CD8-positive, alpha-beta T cell (primary cell): ENCODE measurements at regions of chr11 and their contacts with region 1.

Region 1: GRCh38 chr11:3947061-3947460 is 91.6 kb downstream of the STIM1 start:
- DNase-seq: peak; percentile 23 to 90 (median 62)
- ATAC-seq: peak; percentile 72
- H3K4me3 ChIP-seq: peak overlapping the region; percentile 32 to 35
- H3K4me3 Mint-ChIP-seq: peak overlapping the region; percentile 75
- H3K27ac ChIP-seq: peak overlapping the region; percentile 68 to 86
- H3K27ac Mint-ChIP-seq: peak overlapping the region; percentile 95
- H3K4me1 ChIP-seq: peaks cover 95% of the 10 kb centered on the region
- H3K4me1 Mint-ChIP-seq: peaks cover 95% of the 10 kb centered on the region
- H3K27me3 ChIP-seq: no peaks in the 10 kb centered on the region
- H3K27me3 Mint-ChIP-seq: no peaks in the 10 kb centered on the region
- CTCF ChIP-seq: no peak

Region 2: DNA sequence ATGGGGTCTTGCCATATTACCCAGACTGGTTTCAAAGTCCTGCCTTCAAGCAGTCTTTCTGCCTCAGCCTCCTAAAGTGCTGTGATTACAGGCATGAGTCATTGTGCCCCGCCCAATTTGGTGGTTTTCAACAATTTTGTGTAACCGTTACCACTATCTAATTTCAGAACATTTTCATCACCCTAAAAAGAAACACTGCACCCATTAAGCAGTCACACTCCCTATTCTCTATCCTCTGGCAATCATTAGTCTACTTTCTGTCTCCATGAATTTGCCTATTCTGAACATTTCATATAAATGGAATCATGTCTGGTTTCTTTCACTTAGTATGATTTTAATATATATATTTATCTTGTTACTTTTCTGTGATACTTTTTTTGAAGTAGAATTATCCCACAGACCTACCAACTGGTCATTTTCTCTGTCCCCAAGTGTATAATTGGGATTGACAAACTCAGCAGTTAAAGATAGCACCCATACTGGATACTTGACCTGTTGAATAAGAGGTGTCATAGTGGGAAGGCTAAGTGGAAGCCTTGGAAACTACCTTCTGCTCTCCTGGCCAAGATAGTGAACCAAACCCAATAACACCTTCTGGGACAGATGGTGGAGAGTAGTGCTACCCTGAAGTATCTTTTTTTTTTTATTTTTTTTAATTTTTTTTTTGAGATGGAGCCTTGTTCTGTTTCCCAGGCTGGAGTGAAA is 26.8 kb before region 1 on chr11:
- CTCF ChIA-PET with region 1: no interaction called
- POLR2A ChIA-PET with region 1: interaction called, 5 read pairs
- intact Hi-C with region 1: loop called in 1 of 2 experiments (anchors 1 kb)
- DNase-seq: peak; percentile 4 to 83 (median 71)
- ATAC-seq: peak; percentile 85
- H3K4me3 ChIP-seq: no peak overlapping the region
- H3K4me3 Mint-ChIP-seq: peak overlapping the region; percentile 27
- H3K27ac ChIP-seq: peak overlapping the region in 1 of 2 experiments; percentile 46
- H3K27ac Mint-ChIP-seq: peak overlapping the region; percentile 34
- H3K4me1 ChIP-seq: peaks cover 49% of the 10 kb centered on the region
- H3K4me1 Mint-ChIP-seq: peaks cover 64% of the 10 kb centered on the region
- H3K27me3 ChIP-seq: no peaks in the 10 kb centered on the region
- H3K27me3 Mint-ChIP-seq: no peaks in the 10 kb centered on the region
- CTCF ChIP-seq: no peak

Region 3: GRCh38 chr11:3962406-3962840 is 15.4 kb after region 1 on chr11:
- CTCF ChIA-PET with region 1: interaction called, 5 read pairs
- POLR2A ChIA-PET with region 1: interaction called, 7 read pairs
- intact Hi-C with region 1: loop called in 1 of 2 experiments (anchors 2 kb)
- DNase-seq: no peak
- ATAC-seq: no peak
- H3K4me3 ChIP-seq: no peak overlapping the region
- H3K4me3 Mint-ChIP-seq: no peak overlapping the region
- H3K27ac ChIP-seq: no peak overlapping the region
- H3K27ac Mint-ChIP-seq: no peak overlapping the region
- H3K4me1 ChIP-seq: peaks cover 47% of the 10 kb centered on the region
- H3K4me1 Mint-ChIP-seq: peaks cover 79% of the 10 kb centered on the region
- H3K27me3 ChIP-seq: no peaks in the 10 kb centered on the region
- H3K27me3 Mint-ChIP-seq: no peaks in the 10 kb centered on the region
- CTCF ChIP-seq: no peak

Region 4: DNA sequence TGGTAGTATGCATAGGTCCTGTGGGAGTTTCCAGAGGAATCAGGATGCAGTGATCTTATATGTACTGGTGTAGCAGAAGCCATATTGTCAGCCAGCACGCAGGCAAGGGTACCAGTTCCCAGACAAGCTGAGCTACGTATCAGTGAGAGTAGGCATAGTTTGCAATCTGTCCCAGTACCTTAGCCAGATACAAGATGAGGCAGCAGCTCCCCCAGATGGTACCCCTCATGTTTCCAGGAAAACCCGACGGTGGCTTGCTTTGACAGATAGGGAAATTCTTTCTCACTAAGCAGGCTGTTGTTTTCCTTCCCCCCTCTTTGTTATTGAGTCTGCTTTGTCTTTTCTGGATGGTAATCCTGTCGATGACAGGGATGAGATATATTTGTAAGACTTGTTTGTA is 37.8 kb after region 1 on chr11:
- CTCF ChIA-PET with region 1: interaction called, 7 read pairs
- POLR2A ChIA-PET with region 1: interaction called, 3 read pairs
- intact Hi-C with region 1: loop called (anchors 2 to 5 kb)
- DNase-seq: peak in 7 of 9 experiments; percentile 12 to 72 (median 54)
- ATAC-seq: peak; percentile 77
- H3K4me3 ChIP-seq: no peak overlapping the region
- H3K4me3 Mint-ChIP-seq: no peak overlapping the region
- H3K27ac ChIP-seq: no peak overlapping the region
- H3K27ac Mint-ChIP-seq: peak overlapping the region; percentile 92
- H3K4me1 ChIP-seq: peaks cover 78% of the 10 kb centered on the region
- H3K4me1 Mint-ChIP-seq: peaks cover 91% of the 10 kb centered on the region
- H3K27me3 ChIP-seq: no peaks in the 10 kb centered on the region
- H3K27me3 Mint-ChIP-seq: no peaks in the 10 kb centered on the region
- CTCF ChIP-seq: peak; percentile 21

Region 5: DNA sequence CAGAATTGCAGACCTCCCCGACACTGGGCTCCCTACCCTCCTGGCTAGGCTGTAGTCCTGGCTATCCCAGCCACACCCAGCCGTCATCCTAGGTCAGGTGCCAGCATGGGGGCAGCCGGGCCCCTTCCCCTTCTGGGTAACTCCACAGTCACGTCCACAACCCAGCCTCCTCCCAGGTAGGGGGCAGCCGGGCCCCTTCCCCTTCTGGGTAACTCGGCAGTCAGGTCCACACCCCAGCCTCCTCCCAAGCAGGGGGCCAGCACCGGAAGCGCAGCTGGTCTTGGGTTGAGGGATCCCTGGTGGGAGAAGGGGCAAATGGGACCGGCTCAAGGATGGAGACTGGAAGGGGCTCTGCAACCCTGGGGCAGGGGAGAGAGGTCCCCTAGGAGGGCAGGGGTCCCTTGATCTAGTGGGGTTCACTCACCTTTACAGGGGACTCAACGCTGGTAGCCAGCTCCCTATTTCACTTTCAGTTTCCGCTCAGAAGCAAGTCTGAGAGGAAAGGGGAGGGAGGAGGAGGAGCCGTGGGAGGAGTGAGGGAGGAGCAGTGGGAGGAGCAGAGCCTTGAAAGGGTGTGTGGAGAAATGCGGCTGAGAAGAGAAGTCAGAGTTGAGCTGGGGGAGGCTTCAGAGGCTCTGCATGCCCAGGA is 446.3 kb after region 1 on chr11 and contains the start of gene TRIM21:
- CTCF ChIA-PET with region 1: no interaction called
- POLR2A ChIA-PET with region 1: no interaction called
- intact Hi-C with region 1: no loop called
- DNase-seq: peak; percentile 78 to 93 (median 88)
- ATAC-seq: peak; percentile 99
- H3K4me3 ChIP-seq: peak within 1 kb of the TSS; percentile 81 to 89
- H3K4me3 Mint-ChIP-seq: peak within 1 kb of the TSS; percentile 94
- H3K27ac ChIP-seq: peak within 1 kb of the TSS; percentile 82 to 89
- H3K27ac Mint-ChIP-seq: peak within 1 kb of the TSS; percentile 95
- H3K4me1 ChIP-seq: peaks cover 18% of the 10 kb centered on the region
- H3K4me1 Mint-ChIP-seq: peaks cover 43% of the 10 kb centered on the region
- H3K27me3 ChIP-seq: no peaks in the 10 kb centered on the region
- H3K27me3 Mint-ChIP-seq: no peaks in the 10 kb centered on the region
- CTCF ChIP-seq: no peak
- total RNA-seq, gene TRIM21: 23.4 to 23.6 TPM